Adrenal gland (tissue), 19 donors: ENCODE measurements at regions of chr6 and their contacts with region 1.

Region 1: GRCh38 chr6:37018198-37019064 is 13.0 kb downstream of the FGD2 start:
- DNase-seq: peak; percentile 91 to 98 (median 94)
- H3K4me3 ChIP-seq: no peak overlapping the region
- H3K27ac ChIP-seq: peak overlapping the region in 1 of 5 donors; percentile 56
- H3K4me1 ChIP-seq: peaks cover 0 to 15% of the 10 kb centered on the region in 2 donors
- H3K27me3 ChIP-seq: no peaks in the 10 kb centered on the region
- CTCF ChIP-seq: peak; percentile 78 to 96 (median 90)
- POLR2A ChIP-seq: no peak

Region 2: GRCh38 chr6:36897609-36898008 is 120.8 kb before region 1 on chr6:
- intact Hi-C with region 1: loop called in 1 of 2 experiments (anchors 10 kb)
- DNase-seq: peak in 1 of 7 donors; percentile 33
- H3K4me3 ChIP-seq: no peak overlapping the region
- H3K27ac ChIP-seq: no peak overlapping the region
- H3K4me1 ChIP-seq: peaks cover 8 to 9% of the 10 kb centered on the region in 2 donors
- H3K27me3 ChIP-seq: no peaks in the 10 kb centered on the region
- CTCF ChIP-seq: peak in 2 of 6 experiments; percentile 15 to 17
- POLR2A ChIP-seq: no peak

Region 3: GRCh38 chr6:36962874-36963273 is 55.6 kb before region 1 on chr6:
- intact Hi-C with region 1: no loop called
- DNase-seq: peak; percentile 55 to 86 (median 73)
- H3K4me3 ChIP-seq: no peak overlapping the region
- H3K27ac ChIP-seq: no peak overlapping the region
- H3K4me1 ChIP-seq: peaks cover 0 to 16% of the 10 kb centered on the region in 2 donors
- H3K27me3 ChIP-seq: no peaks in the 10 kb centered on the region
- CTCF ChIP-seq: no peak
- POLR2A ChIP-seq: no peak